ENCODE measurements at regions of chr14 and their contacts with region 1.

Region 1: GRCh38 chr14:75577729-75578101 is 705 bp upstream of the FLVCR2 start:
- DNase-seq: no peak
- H3K4me3 ChIP-seq: peak overlapping the region; percentile 59
- CTCF ChIP-seq: peak; percentile 85

Region 2: DNA sequence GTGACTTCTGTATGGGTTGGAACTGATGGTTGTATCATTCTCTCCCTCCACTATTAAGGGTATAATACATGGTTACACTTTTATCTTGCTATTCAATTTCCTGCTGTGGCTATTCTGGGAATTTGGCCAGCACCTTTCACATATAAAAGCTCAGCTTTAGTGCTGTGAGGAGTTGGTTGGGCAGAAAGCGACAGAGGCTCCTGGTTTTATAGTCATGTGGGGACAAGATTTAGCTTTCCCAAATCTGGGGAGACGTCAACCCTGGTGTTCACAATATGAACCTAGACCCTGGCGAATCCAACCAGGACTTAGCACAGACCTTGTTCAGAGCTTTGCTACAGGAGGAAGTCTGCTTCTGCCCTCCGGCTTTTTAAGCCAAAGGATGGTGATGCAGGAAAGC is 262.6 kb before region 1 on chr14:
- CTCF ChIA-PET with region 1: no interaction called
- POLR2A ChIA-PET with region 1: no interaction called
- DNase-seq: no peak
- H3K4me3 ChIP-seq: no peak overlapping the region
- CTCF ChIP-seq: no peak

Region 3: GRCh38 chr14:75328558-75329155 is 249.1 kb before region 1 on chr14:
- CTCF ChIA-PET with region 1: no interaction called
- POLR2A ChIA-PET with region 1: no interaction called
- DNase-seq: no peak
- H3K4me3 ChIP-seq: no peak overlapping the region
- CTCF ChIP-seq: no peak

Region 4: DNA sequence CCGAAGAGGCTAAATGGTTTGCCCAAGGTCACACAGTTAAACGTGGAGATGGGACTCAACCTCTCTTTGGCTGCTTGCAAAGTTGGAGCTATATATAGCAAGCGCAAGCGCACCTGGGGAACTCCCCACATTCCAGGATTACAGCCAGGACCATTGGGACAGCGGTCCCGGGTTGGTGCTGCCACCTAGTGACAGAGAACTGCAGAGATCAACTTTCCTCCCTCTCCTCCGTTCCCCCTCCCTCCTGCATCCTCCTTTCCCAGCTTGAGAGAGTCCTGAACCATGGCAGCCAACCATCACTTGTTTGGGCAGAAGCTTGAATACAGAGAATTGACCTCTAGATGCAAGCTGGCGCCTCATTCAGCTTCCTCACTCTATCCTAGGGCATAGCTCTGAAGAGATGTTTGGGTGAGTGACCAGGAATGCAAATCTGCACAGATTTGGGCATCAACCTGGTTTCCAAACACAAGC is 16.7 kb before region 1 on chr14:
- CTCF ChIA-PET with region 1: interaction called, 141 read pairs
- POLR2A ChIA-PET with region 1: no interaction called
- DNase-seq: no peak
- H3K4me3 ChIP-seq: no peak overlapping the region
- CTCF ChIP-seq: peak; percentile 86

Region 5: DNA sequence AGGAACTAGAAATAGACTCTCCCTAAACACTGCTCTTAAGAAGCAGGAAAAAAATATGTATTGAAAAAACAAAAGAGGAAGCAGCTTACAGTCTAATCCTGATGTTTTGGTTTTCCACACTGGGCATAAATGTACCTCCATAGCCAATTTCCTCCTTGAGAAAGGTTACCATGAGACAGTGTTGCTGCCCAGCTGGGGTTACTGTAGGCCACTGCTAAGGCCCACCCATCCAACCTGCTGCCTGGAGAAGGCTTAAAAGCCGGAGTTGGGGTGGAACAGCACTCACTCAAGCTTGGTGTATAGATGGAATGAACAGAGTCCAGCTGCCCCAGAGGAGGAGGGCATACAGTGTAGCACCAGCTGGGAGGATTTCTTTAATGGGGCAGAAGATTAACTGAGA is 41.8 kb after region 1 on chr14:
- CTCF ChIA-PET with region 1: interaction called, 20 read pairs
- POLR2A ChIA-PET with region 1: no interaction called
- DNase-seq: no peak
- H3K4me3 ChIP-seq: no peak overlapping the region
- CTCF ChIP-seq: no peak

Region 6: DNA sequence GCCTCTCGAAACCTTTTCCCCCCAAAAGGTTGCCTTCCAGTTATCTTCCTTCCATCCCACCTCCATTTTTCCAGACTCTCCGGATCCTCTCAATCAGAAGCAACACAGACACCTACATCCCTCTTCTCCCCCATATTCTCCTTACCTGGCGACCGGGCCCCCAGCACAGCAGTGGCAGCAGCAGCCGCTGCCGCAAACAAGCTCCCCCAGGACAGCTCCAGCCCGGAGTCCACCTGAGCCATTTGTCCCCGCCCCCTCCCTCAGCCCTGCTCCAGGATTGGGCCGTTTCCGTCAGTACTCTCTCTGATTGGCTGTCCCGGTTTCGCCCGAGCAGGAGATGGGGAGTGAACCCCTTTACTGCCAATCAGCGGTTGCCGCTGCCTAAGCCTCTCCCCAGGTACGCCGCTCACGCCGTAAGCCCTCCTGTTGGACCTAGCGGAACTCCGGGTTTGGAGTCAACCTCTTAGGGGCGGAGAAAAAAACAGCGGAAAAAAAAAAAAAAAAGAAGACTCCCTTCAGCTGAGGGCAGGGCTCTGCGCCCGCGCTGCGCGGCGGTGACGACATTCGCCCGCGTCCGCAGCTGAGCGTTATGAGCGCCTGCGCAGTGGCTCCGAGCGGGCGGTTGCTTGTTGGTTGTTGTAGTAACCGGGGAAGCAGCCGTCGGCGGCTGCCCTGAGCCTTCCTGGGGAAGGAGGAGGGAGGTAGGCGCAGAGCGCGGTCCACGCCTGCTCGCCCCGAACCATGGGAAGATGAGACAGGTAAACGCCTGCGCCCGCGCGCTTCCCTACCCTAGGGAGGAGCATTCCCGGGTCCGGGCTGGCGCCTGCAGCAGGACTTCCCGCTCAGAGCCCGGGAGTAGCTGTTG is 83.1 kb after region 1 on chr14 and contains the starts of genes ERG28 and TTLL5:
- CTCF ChIA-PET with region 1: interaction called, 896 read pairs
- POLR2A ChIA-PET with region 1: no interaction called
- DNase-seq: peak; percentile 93
- H3K4me3 ChIP-seq: peak within 1 kb of the TSS; percentile 98
- CTCF ChIP-seq: no peak

Region 7: GRCh38 chr14:75875958-75876357 is 298.2 kb after region 1 on chr14:
- CTCF ChIA-PET with region 1: no interaction called
- POLR2A ChIA-PET with region 1: no interaction called
- DNase-seq: no peak
- H3K4me3 ChIP-seq: no peak overlapping the region
- CTCF ChIP-seq: no peak

Measured in AG04449 (cell line).